ENCODE measurements at regions of chr16 and their contacts with region 1.

Region 1: DNA sequence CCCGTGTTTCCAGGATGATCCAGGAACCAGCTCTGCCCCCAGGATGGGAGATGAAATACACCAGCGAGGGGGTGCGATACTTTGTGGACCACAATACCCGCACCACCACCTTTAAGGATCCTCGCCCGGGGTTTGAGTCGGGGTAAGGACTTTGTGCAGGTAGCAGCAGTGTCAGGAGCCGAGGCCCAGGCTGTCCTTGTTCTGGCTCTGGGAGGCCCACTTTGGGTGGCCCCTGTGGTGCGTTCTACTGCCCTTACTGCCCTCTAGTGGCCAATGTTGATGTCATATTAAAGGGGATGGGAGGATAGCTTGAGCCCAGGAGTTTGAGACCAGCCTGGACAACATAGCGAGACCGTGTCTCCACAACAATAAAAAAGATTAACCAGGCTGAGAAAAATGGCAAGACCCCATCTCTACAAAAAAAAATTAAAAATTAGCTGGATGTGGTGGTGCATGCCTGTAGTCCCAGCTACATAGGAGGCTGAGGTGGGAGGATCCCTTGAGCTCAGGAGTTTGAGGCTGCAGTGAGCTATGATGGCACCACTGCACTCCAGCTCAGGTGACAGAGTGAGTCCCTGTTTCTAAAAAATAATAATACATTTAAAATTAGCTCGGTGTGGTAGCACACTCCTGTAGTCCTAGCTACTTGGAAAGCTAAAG is 20.9 kb upstream of the CLEC18A start:
- DNase-seq: peak; percentile 68
- H3K4me3 ChIP-seq: no peak overlapping the region
- H3K27ac ChIP-seq: no peak overlapping the region
- H3K4me1 ChIP-seq: no peaks in the 10 kb centered on the region
- CTCF ChIP-seq: peak; percentile 88

Region 2: DNA sequence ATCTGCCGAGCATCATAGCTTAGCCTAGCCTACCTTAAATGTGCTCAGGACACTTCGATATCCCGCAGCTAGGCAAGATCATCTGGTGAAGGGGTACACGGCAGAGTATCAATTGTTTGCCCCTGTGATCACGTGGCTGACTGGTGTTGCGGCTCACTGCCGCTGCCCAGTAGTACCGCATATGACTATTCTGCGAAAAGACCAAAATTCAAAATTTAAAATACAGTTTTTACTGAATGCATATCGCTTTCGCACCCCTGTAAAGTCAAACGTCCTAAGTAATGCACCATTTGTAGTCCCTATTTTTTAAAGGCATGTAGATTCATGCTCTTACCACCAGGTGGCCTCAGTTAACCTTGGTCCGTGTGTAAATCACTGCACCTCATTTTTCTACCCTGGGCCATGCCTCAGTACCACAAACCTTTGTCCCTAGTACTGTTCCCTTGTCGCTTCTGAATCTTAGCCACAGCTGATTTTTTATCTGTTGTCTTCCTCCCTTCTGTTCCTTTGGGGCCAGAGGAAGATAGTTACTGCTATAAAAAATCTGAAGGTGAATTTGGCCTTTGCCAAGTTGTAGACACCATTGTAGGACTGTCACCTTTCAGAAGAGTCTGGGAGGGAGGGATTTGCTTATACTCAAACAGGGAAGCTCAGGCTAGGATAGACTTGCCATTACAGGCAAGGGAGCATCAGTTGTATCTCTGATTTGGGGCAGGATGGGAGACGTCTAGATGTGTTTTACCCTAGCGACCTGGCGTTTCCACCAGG is 133.7 kb before region 1 on chr16:
- CTCF ChIA-PET with region 1: no interaction called
- POLR2A ChIA-PET with region 1: no interaction called
- intact Hi-C with region 1: loop called (anchors 1 kb)
- DNase-seq: peak; percentile 70
- H3K4me3 ChIP-seq: no peak overlapping the region
- H3K27ac ChIP-seq: no peak overlapping the region
- H3K4me1 ChIP-seq: no peaks in the 10 kb centered on the region
- CTCF ChIP-seq: peak; percentile 93

Region 3: DNA sequence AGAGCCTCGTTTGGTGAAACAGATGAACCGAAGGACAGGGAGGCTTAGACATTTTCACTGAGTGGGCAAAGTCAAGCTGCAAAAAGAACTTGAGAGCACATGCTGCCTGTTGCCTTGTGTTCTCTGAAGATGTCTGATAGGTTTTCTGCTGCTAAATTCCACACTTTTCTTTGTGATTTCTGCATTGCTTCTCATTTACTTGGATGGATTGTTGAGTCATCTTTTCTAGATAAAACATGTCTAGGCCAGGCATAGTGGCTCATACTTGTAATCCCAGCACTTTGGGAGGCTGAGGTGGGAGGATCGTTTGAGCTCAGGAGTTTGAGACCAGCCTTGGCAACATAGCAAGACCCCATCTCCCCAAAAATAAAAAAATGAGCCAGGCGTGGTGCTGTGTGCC is 59.5 kb before region 1 on chr16:
- CTCF ChIA-PET with region 1: no interaction called
- POLR2A ChIA-PET with region 1: no interaction called
- intact Hi-C with region 1: no loop called
- DNase-seq: no peak
- H3K4me3 ChIP-seq: no peak overlapping the region
- H3K27ac ChIP-seq: no peak overlapping the region
- H3K4me1 ChIP-seq: no peaks in the 10 kb centered on the region
- CTCF ChIP-seq: no peak

Region 4: DNA sequence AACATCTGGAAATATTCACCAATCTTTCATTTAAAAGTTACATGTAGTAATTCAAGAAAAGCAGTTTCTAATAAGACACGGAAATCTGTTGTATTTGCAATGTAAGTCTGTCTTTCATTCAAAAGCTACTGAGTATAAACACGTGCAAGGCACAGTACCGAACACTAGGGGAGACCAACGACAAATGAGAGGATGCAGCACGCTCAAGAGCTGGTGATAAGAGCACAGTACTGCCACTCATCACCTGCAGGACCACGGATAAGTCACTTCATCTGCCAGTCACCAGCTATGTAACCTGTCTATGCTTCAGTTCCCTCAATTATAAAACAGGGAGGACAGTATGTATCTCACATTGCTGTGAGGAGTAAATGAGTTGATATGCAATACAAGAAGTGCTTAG is 88.0 kb after region 1 on chr16:
- CTCF ChIA-PET with region 1: no interaction called
- POLR2A ChIA-PET with region 1: no interaction called
- intact Hi-C with region 1: no loop called
- DNase-seq: peak; percentile 72
- H3K4me3 ChIP-seq: no peak overlapping the region
- H3K27ac ChIP-seq: no peak overlapping the region
- H3K4me1 ChIP-seq: no peaks in the 10 kb centered on the region
- CTCF ChIP-seq: peak; percentile 69

Region 5: DNA sequence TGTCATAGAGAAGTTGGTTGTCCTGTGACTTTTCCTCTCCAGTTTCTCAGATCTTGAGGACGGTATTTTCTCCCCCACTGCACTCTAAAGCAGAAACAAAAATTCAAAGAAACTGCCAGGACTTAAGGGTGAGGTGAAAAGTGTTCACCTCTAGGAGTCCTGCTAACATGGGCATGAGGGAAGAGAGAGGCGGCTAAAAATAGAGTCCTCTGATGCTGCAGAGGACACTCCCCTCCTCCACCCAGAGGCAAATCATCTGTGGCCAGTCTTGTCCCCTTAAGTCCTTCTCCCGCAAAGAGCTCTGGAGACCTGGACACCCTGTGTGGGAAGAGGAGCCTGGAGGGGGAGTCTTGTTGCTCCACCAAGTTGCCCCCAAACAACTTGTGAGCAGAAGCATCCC is 411.8 kb after region 1 on chr16:
- CTCF ChIA-PET with region 1: no interaction called
- POLR2A ChIA-PET with region 1: no interaction called
- intact Hi-C with region 1: no loop called
- DNase-seq: no peak
- H3K4me3 ChIP-seq: no peak overlapping the region
- H3K27ac ChIP-seq: no peak overlapping the region
- H3K4me1 ChIP-seq: peaks cover 14% of the 10 kb centered on the region
- CTCF ChIP-seq: no peak

Measured in OCI-LY7 (cell line).